GM13976 (cell line): ENCODE measurements at regions of chr1 and their contacts with region 1.

Region 1: DNA sequence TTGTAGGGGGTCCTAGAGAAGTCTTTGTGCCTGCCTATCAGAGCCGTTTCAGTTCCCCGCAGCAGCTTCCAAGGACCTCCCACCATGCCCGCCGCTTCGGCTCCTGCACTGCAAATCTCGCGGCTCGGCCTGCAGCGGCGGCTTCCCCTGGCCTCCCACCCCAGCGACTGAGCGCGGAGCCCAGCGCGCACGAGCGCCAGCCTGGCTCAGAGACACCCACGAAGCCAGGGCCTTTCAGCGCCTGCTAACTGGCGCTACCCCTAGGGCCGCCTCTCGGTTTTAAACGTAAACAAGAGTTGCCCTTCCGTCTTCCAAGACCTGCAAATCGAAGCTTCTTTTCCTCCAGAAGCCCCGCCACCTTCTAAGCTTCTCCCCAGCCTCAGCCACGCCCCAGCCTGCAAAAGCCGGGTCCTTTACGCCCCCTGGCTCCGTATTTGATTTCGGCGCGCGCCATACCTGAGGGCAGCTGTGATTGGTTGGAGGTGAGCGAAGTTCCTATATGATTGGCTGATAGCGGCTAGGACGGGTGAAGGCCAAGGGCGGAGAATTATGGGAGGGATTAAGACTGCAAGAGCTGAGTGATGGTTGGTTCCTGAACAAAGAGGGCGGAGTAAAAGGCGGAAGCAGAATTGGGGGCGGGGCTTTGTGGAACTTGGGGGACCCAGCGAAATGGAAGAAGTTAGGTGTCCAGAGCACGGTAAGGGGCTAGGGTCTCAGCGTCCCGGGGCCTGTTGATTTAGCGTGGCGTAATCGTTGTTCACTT is at the start of gene TTF2:
- DNase-seq: peak; percentile 96
- CTCF ChIP-seq: peak; percentile 11

Region 2: DNA sequence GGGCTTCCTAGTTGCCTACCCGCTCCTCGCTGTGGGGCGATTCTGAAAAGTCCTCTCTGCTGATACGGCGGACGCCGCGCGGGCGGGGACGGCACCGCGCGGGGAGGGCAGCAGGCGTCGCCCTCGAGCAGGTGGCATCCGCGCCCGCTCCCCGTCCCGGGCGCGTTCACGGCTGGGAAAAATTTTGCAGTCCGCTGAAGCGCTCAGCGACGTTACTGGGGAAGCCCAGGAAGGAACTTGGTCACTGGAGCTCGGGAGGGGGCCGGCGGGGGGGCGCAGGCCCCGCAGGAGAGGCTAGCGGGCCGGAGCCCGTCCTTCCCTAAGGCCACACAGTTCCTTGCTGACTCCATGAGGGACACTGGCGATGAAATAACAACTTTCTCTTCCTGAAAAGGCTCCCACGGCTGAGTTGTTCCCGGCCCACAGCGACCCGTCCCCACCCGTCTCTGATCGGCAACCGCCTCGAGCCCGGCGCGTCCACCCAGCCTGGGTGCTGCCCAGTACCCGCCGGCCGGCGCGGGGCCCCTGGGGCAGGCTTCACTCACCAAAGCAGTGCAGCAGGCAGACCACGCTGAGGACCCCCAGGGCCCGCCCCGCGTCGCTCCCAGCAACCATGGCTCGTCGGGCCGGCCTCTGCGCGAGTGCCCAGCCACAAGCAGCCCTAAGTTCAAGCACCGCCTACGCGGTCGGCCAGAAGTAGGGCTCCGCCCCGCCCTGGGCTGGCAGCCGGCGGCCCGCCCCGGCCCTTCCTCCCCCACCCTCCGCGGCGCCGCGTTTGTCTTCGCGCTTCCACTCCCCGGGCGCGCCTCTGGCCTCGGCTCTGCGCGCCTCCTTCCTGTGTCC is 489.3 kb before region 1 on chr1 and contains the start of gene CD58:
- in situ Hi-C with region 1: loop called (anchors 10 kb)
- DNase-seq: peak; percentile 92
- CTCF ChIP-seq: peak; percentile 87

Region 3: GRCh38 chr1:116737020-116737854 is 322.6 kb before region 1 on chr1:
- in situ Hi-C with region 1: loop called (anchors 10 kb)
- DNase-seq: peak; percentile 78
- CTCF ChIP-seq: peak; percentile 76

Region 4: GRCh38 chr1:116826818-116827606 is 232.8 kb before region 1 on chr1:
- in situ Hi-C with region 1: loop called (anchors 10 kb)
- DNase-seq: peak; percentile 82
- CTCF ChIP-seq: no peak

Region 5: DNA sequence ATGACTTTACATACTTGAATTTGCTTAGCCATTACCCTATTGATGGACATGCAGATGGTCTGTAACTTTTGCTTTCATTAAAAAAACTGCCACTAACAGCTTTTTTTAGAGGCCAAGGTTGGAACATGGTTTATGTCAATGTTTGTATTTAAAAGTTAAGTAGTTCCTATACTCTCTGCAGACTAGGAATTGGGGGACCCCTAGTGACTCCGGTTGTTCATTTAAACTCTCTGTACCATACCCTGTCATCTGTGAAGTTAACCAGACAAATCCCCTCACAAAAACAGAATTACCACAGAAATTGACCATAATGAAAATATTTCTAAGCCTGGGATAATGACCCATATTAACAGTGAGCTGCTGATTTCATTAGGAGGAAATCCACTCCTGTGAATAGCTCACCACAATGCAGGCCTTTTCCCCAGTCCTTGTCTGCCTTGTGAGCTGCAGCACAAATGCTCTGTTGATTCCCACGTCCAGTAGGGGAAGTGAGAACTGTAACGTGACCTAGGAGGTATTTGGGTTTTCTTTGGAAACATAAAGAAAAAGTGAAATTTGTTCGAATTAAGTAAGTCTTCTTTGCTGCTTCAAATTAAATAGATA is 88.5 kb before region 1 on chr1:
- in situ Hi-C with region 1: no loop called
- DNase-seq: no peak
- CTCF ChIP-seq: no peak

Region 6: GRCh38 chr1:117110774-117111173 is 50.9 kb after region 1 on chr1:
- in situ Hi-C with region 1: loop called (anchors 10 kb)
- DNase-seq: no peak
- CTCF ChIP-seq: no peak